ENCODE measurements at regions of chr16 and their contacts with region 1.

Region 1: GRCh38 chr16:66740010-66740409 is 11.4 kb downstream of the DYNC1LI2 start:
- DNase-seq: peak in 2 of 3 donors; percentile 54 to 62
- H3K4me3 ChIP-seq: no peak overlapping the region
- H3K27ac ChIP-seq: peak overlapping the region in 1 of 2 experiments; percentile 6
- H3K4me1 ChIP-seq: peaks cover 4 to 13% (median 6%) of the 10 kb centered on the region in 4 experiments
- H3K27me3 ChIP-seq: no peaks in the 10 kb centered on the region

Region 2: GRCh38 chr16:66608241-66609138 is 131.5 kb before region 1 on chr16:
- CTCF ChIA-PET with region 1: interaction called, 12 read pairs
- POLR2A ChIA-PET with region 1: no interaction called
- DNase-seq: peak; percentile 87 to 91 (median 91)
- H3K4me3 ChIP-seq: no peak overlapping the region
- H3K27ac ChIP-seq: peak overlapping the region in 1 of 2 experiments; percentile 59
- H3K4me1 ChIP-seq: peaks cover 0 to 44% (median 38%) of the 10 kb centered on the region in 4 experiments
- H3K27me3 ChIP-seq: no peaks in the 10 kb centered on the region

Region 3: DNA sequence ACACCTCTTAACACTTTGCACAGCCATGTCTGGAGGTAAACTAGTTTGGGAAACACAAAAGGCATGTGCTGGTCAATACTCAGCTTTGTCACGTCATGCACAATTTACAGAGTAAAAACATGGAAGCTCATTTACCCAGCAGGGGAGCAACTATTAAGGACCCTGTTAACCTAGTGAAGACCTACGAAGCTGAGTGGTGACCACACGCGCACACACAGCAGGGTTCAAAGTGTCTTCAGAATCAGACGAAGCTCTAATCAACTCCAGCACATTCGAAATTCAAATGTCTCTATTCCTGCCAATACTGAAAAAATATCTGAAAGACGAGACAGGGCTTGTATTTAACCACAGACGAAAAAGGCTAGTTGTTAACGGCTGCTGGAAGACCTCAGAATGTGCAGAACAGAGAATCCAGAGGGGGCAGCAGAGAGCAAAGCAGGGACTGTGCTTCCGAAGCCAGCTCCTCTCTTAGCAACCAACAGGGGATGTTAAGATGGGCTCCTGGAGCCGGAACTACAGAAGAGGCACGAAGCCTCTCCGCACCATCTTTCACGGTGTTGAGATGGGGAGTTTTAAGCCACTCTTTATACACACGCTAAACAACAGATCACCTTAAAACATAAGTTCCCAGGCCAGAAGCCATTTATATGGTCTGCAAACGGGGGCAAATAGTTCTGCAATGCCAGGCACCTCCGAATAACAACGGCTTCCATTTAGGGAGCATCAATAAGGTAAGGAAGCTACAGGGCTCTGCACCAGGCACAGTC is 89.1 kb before region 1 on chr16:
- CTCF ChIA-PET with region 1: interaction called, 16 read pairs
- POLR2A ChIA-PET with region 1: no interaction called
- DNase-seq: peak; percentile 88 to 94 (median 93)
- H3K4me3 ChIP-seq: peak overlapping the region in 4 of 7 experiments; percentile 29 to 73 (median 56)
- H3K27ac ChIP-seq: no peak overlapping the region
- H3K4me1 ChIP-seq: peaks cover 4 to 15% (median 9%) of the 10 kb centered on the region in 4 experiments
- H3K27me3 ChIP-seq: no peaks in the 10 kb centered on the region

Region 4: GRCh38 chr16:66728117-66728787 is 11.8 kb before region 1 on chr16:
- CTCF ChIA-PET with region 1: interaction called, 107 read pairs
- POLR2A ChIA-PET with region 1: no interaction called
- DNase-seq: peak; percentile 64 to 80 (median 80)
- H3K4me3 ChIP-seq: no peak overlapping the region
- H3K27ac ChIP-seq: no peak overlapping the region
- H3K4me1 ChIP-seq: peaks cover 3 to 11% (median 10%) of the 10 kb centered on the region in 4 experiments
- H3K27me3 ChIP-seq: no peaks in the 10 kb centered on the region

Region 5: GRCh38 chr16:66751303-66751991 is 11.4 kb after region 1 on chr16 and contains the start of gene DYNC1LI2:
- CTCF ChIA-PET with region 1: interaction called, 24 read pairs
- POLR2A ChIA-PET with region 1: interaction called, 3 read pairs
- DNase-seq: peak; percentile 76 to 83 (median 78)
- H3K4me3 ChIP-seq: peak within 1 kb of the TSS; percentile 74 to 99 (median 94)
- H3K27ac ChIP-seq: peak within 1 kb of the TSS; percentile 78 to 90
- H3K4me1 ChIP-seq: peaks cover 16 to 32% (median 27%) of the 10 kb centered on the region in 4 experiments
- H3K27me3 ChIP-seq: peaks cover 0 to 18% (median 10%) of the 10 kb centered on the region in 5 experiments

Measured in common myeloid progenitor, CD34-positive (primary cell).